ENCODE measurements at regions of chr1 and their contacts with region 1.

Region 1: GRCh38 chr1:207097871-207098324 is 6.1 kb upstream of the C4BPA start:
- DNase-seq: peak; percentile 75
- H3K4me3 Mint-ChIP-seq: peak overlapping the region; percentile 29
- H3K27ac Mint-ChIP-seq: peak overlapping the region; percentile 86
- H3K4me1 Mint-ChIP-seq: peaks cover 23% of the 10 kb centered on the region
- H3K27me3 Mint-ChIP-seq: peaks cover 9% of the 10 kb centered on the region

Region 2: GRCh38 chr1:207052911-207053769 is 44.8 kb before region 1 on chr1 and contains the start of gene PFKFB2:
- intact Hi-C with region 1: no loop called
- DNase-seq: peak; percentile 98
- H3K4me3 Mint-ChIP-seq: peak within 1 kb of the TSS; percentile 100
- H3K27ac Mint-ChIP-seq: peak within 1 kb of the TSS; percentile 83
- H3K4me1 Mint-ChIP-seq: peaks cover 36% of the 10 kb centered on the region
- H3K27me3 Mint-ChIP-seq: peaks cover 7% of the 10 kb centered on the region
- total RNA-seq, gene PFKFB2: 2.6 and 3.5 TPM in 2 replicates

Region 3: GRCh38 chr1:207084701-207085180 is 13.2 kb before region 1 on chr1:
- intact Hi-C with region 1: loop called (anchors 2 kb)
- DNase-seq: peak; percentile 89
- H3K4me3 Mint-ChIP-seq: no peak overlapping the region
- H3K27ac Mint-ChIP-seq: no peak overlapping the region
- H3K4me1 Mint-ChIP-seq: peaks cover 30% of the 10 kb centered on the region
- H3K27me3 Mint-ChIP-seq: peaks cover 24% of the 10 kb centered on the region

Region 4: GRCh38 chr1:207145401-207146058 is 47.6 kb after region 1 on chr1:
- intact Hi-C with region 1: no loop called
- DNase-seq: no peak
- H3K4me3 Mint-ChIP-seq: no peak overlapping the region
- H3K27ac Mint-ChIP-seq: no peak overlapping the region
- H3K4me1 Mint-ChIP-seq: no peaks in the 10 kb centered on the region
- H3K27me3 Mint-ChIP-seq: no peaks in the 10 kb centered on the region

Region 5: GRCh38 chr1:207389740-207390464 is 292.0 kb after region 1 on chr1:
- intact Hi-C with region 1: loop called (anchors 1 kb)
- DNase-seq: no peak
- H3K4me3 Mint-ChIP-seq: no peak overlapping the region
- H3K27ac Mint-ChIP-seq: peak overlapping the region; percentile 82
- H3K4me1 Mint-ChIP-seq: peaks cover 8% of the 10 kb centered on the region
- H3K27me3 Mint-ChIP-seq: no peaks in the 10 kb centered on the region

Region 6: DNA sequence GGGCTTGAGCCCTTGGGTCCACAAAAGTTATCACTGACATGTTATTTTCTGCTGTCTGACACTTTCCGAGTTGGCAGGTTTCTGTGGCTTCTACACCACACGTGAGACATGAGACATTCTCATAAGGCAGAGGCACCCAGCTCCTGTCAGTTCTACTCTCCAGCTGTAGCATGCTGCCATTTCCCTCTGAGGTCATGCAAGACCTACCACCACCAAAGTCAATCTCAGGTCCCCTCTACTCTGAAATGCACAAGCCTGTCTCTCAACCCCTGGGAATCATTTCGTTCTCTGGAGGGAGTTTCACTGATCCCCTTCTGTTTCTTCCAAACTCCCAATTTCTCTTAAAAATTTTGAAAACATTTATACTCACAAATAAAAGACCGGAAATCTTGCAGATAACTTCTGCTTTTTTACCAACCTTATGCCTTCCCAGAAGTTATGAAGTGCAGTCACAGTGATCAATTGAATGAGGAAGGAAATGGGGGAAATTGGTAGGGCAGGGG is 316.8 kb after region 1 on chr1:
- intact Hi-C with region 1: loop called (anchors 1 kb)
- DNase-seq: peak; percentile 69
- H3K4me3 Mint-ChIP-seq: peak overlapping the region; percentile 12
- H3K27ac Mint-ChIP-seq: peak overlapping the region; percentile 45
- H3K4me1 Mint-ChIP-seq: peaks cover 26% of the 10 kb centered on the region
- H3K27me3 Mint-ChIP-seq: peaks cover 9% of the 10 kb centered on the region

Measured in activated CD4-positive, alpha-beta T cell treated with anti-CD3 and anti-CD28 coated beads, Interleukin-2, amount 10 ng/mL, durations not matched to agents 24 days and 14 days (primary cell).